Caco-2 (cell line): ENCODE measurements at regions of chr17 and their contacts with region 1.

Region 1: GRCh38 chr17:51585514-51586104 is 325.3 kb downstream of the UTP18 start:
- DNase-seq: peak in 1 of 2 experiments; percentile 41
- H3K4me3 ChIP-seq: no peak overlapping the region
- H3K4me3 Mint-ChIP-seq: no peak overlapping the region
- H3K27ac Mint-ChIP-seq: no peak overlapping the region
- H3K4me1 ChIP-seq: no peaks in the 10 kb centered on the region
- H3K4me1 Mint-ChIP-seq: no peaks in the 10 kb centered on the region
- H3K27me3 ChIP-seq: no peaks in the 10 kb centered on the region
- H3K27me3 Mint-ChIP-seq: peaks cover 2% of the 10 kb centered on the region
- CTCF ChIP-seq: peak; percentile 40 to 67

Region 2: DNA sequence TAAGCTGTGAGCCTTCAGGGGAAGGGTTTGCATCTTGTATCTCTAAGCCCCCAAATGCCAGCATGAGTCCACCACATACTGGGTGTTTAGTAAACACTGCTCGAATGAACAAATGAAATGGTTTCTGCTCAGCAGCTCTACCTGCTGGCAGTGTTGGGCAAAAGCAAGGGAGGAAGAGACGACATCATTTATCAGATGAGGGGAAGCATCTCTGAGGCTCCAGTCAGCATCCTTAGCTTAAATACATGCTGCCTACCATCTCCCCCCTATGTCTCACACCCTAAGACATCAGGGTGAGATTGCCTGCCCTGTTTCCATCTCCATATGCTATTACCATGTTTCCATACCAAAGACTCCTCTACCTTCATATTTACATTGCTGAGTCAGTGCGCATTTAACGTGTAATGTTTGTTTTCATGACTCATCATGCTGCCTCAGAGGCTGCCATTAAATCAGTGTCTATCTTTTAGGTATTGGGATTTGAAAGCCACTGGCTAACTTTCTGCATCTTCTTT is 54.6 kb after region 1 on chr17:
- CTCF ChIA-PET with region 1: interaction called, 3 read pairs
- POLR2A ChIA-PET with region 1: no interaction called
- intact Hi-C with region 1: loop called (anchors 1 kb)
- DNase-seq: peak in 1 of 2 experiments; percentile 27
- H3K4me3 ChIP-seq: no peak overlapping the region
- H3K4me3 Mint-ChIP-seq: no peak overlapping the region
- H3K27ac Mint-ChIP-seq: no peak overlapping the region
- H3K4me1 ChIP-seq: 0 out of 2 replicates have a peak, but pooled peaks cover 6% of the 10 kb centered on the region
- H3K4me1 Mint-ChIP-seq: no peaks in the 10 kb centered on the region
- H3K27me3 ChIP-seq: no peaks in the 10 kb centered on the region
- H3K27me3 Mint-ChIP-seq: peaks cover 14% of the 10 kb centered on the region
- CTCF ChIP-seq: peak; percentile 52

Region 3: GRCh38 chr17:51734462-51734861 is 148.9 kb after region 1 on chr17:
- CTCF ChIA-PET with region 1: no interaction called
- POLR2A ChIA-PET with region 1: no interaction called
- intact Hi-C with region 1: loop called (anchors 1 kb)
- DNase-seq: peak in 1 of 2 experiments; percentile 42
- H3K4me3 ChIP-seq: no peak overlapping the region
- H3K4me3 Mint-ChIP-seq: no peak overlapping the region
- H3K27ac Mint-ChIP-seq: no peak overlapping the region
- H3K4me1 ChIP-seq: no peaks in the 10 kb centered on the region
- H3K4me1 Mint-ChIP-seq: peaks cover 6% of the 10 kb centered on the region
- H3K27me3 ChIP-seq: no peaks in the 10 kb centered on the region; the same call in 1 of the 2 replicates
- H3K27me3 Mint-ChIP-seq: peaks cover 15% of the 10 kb centered on the region
- CTCF ChIP-seq: peak; percentile 60 to 65